Dendritic cell treated with granulocyte-macrophage colony-stimulating factor and Interleukin-4, amounts not matched to agents 40 ng/mL and 50 ng/mL, for 4 days (primary cell): ENCODE measurements at regions of chr5 and their contacts with region 1.

Region 1: GRCh38 chr5:165209086-165209727 is 1703.8 kb downstream of the MAT2B start:
- H3K4me3 Mint-ChIP-seq: no peak overlapping the region
- H3K27ac Mint-ChIP-seq: no peak overlapping the region
- H3K4me1 Mint-ChIP-seq: peaks cover 13% of the 10 kb centered on the region
- H3K27me3 Mint-ChIP-seq: no peaks in the 10 kb centered on the region

Region 2: GRCh38 chr5:163564321-163564938 is 1644.8 kb before region 1 on chr5:
- intact Hi-C with region 1: loop called (anchors 5 kb)
- H3K4me3 Mint-ChIP-seq: no peak overlapping the region
- H3K27ac Mint-ChIP-seq: no peak overlapping the region
- H3K4me1 Mint-ChIP-seq: peaks cover 16% of the 10 kb centered on the region
- H3K27me3 Mint-ChIP-seq: peaks cover 44% of the 10 kb centered on the region

Region 3: DNA sequence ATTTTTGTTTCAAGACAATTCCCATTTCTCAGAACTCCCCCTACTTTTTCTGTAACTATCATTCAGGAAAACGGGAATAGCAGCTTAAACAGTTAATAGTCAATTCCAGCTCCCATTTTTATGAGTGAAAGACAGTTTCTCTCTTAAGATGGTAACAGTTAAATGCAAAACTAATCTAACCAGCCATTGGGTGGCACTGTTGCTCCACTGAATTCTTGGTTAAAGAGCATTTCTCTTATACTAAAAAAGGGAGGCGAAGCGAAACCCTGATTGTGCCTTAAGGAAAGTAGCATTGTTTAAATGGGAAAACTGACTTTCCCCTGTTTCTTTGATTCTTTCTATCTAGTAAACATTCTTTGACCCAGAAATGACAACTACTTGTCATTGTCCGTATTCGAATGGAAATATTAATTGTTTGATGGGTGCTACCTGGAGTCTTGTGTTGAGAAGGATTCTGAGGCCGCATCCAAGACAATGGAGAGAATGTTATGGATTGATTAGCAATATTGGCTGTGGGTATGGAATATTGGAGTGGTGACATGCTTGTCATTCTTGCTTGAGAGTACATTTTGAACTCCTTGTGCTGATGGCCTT is 1196.0 kb before region 1 on chr5:
- intact Hi-C with region 1: loop called (anchors 5 kb)
- H3K4me3 Mint-ChIP-seq: no peak overlapping the region
- H3K27ac Mint-ChIP-seq: no peak overlapping the region
- H3K4me1 Mint-ChIP-seq: no peaks in the 10 kb centered on the region
- H3K27me3 Mint-ChIP-seq: no peaks in the 10 kb centered on the region

Region 4: GRCh38 chr5:164504141-164504772 is 705.0 kb before region 1 on chr5:
- intact Hi-C with region 1: loop called (anchors 10 kb)
- H3K4me3 Mint-ChIP-seq: no peak overlapping the region
- H3K27ac Mint-ChIP-seq: no peak overlapping the region
- H3K4me1 Mint-ChIP-seq: no peaks in the 10 kb centered on the region
- H3K27me3 Mint-ChIP-seq: no peaks in the 10 kb centered on the region

Region 5: GRCh38 chr5:164962329-164962961 is 246.8 kb before region 1 on chr5:
- intact Hi-C with region 1: loop called (anchors 10 kb)
- H3K4me3 Mint-ChIP-seq: no peak overlapping the region
- H3K27ac Mint-ChIP-seq: no peak overlapping the region
- H3K4me1 Mint-ChIP-seq: no peaks in the 10 kb centered on the region
- H3K27me3 Mint-ChIP-seq: no peaks in the 10 kb centered on the region

Region 6: DNA sequence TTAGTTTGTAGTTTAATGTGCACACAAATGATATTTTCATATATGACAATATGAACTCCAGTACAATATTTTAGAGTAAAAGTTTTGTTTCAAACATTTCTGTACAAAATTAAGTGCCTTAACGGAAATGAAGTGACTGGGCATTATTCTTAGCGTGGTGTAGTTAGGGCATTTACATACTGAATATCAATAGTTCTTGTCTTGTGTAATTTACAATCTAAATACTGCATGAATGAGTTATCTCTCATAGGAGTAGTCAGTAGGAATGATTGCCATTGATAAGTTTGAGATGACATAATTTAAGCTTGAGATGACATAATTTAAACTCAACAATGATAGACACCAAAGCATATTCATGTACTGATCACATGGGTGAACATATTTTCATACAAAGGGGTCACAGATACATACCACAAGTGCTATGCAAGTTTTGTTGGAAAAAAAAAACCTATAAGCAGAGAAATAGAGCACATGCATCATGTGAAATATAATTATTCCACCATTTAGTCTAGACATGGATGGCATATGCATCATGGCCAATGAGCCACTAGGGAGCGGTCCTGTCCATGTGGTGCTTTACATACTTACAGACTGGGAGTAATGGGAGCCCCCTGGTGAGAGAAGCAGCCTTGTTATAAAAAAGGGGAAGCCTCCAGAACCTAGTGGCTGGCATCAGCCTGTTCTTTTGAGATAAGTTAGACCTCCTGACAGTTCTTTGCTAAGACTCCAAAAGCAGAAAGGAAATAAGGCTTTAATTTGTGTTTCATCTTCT is 179.9 kb before region 1 on chr5:
- intact Hi-C with region 1: loop called (anchors 1 kb)
- H3K4me3 Mint-ChIP-seq: no peak overlapping the region
- H3K27ac Mint-ChIP-seq: no peak overlapping the region
- H3K4me1 Mint-ChIP-seq: no peaks in the 10 kb centered on the region
- H3K27me3 Mint-ChIP-seq: no peaks in the 10 kb centered on the region

Region 7: GRCh38 chr5:165457859-165458481 is 248.8 kb after region 1 on chr5:
- intact Hi-C with region 1: loop called (anchors 10 kb)
- H3K4me3 Mint-ChIP-seq: no peak overlapping the region
- H3K27ac Mint-ChIP-seq: no peak overlapping the region
- H3K4me1 Mint-ChIP-seq: no peaks in the 10 kb centered on the region
- H3K27me3 Mint-ChIP-seq: no peaks in the 10 kb centered on the region